ENCODE measurements at regions of chr9 and their contacts with region 1.

Region 1: DNA sequence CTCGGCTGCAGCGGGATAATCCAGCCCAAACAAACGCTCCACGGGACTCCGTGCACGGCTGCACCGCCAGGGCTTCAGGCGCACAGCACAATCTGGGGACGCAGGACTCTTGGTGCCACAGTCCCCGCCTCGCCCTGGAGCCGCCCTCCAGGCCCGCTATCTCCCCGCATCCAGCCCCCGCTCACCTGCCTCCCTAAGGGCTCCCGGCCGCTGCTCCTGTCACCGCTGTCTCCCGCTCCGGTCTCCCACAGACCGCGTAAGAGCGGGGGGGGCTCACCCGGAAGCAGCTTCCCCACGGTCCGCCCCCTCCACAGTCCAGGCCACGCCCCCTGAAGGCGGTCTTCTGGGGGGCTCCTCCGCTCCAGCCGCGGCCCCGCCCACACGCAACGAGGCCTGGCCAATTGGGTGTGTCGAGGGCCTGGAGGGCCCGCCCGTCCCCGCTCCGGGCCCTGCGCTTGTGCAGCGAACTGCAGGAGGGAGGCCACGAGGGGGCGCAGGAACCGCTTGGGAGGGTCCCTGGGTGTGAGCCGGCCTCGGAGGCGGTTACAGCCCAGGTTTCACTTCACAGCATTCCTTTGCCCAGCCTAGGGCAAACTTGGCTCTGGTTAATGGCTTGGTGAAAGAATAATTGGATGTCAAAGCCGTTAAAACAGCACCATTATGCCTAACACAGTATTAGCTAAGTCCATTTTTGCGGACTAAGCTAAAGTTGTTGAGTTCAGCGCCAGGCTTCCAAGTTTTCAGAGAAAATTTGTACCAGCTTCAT is at the start of gene ALAD:
- DNase-seq: peak; percentile 99
- H3K4me3 Mint-ChIP-seq: peak within 1 kb of the TSS; percentile 94
- H3K27ac Mint-ChIP-seq: peak within 1 kb of the TSS; percentile 62
- H3K4me1 Mint-ChIP-seq: peaks cover 20% of the 10 kb centered on the region
- H3K27me3 Mint-ChIP-seq: no peaks in the 10 kb centered on the region
- total RNA-seq, gene ALAD: 27.9 and 28.3 TPM in 2 replicates

Region 2: GRCh38 chr9:113150670-113151611 is 250.3 kb before region 1 on chr9 and contains the start of gene SLC31A2:
- intact Hi-C with region 1: no loop called
- DNase-seq: peak; percentile 82
- H3K4me3 Mint-ChIP-seq: peak within 1 kb of the TSS; percentile 79
- H3K27ac Mint-ChIP-seq: peak within 1 kb of the TSS; percentile 42
- H3K4me1 Mint-ChIP-seq: peaks cover 31% of the 10 kb centered on the region
- H3K27me3 Mint-ChIP-seq: peaks cover 11% of the 10 kb centered on the region
- total RNA-seq, gene SLC31A2: 4.7 and 5.0 TPM in 2 replicates

Region 3: GRCh38 chr9:113221003-113221799 is 180.0 kb before region 1 on chr9 and contains the starts of genes FKBP15 and SLC31A1:
- intact Hi-C with region 1: loop called (anchors 2 kb)
- DNase-seq: peak; percentile 94
- H3K4me3 Mint-ChIP-seq: peak within 1 kb of the TSS; percentile 92
- H3K27ac Mint-ChIP-seq: peak within 1 kb of the TSS; percentile 78
- H3K4me1 Mint-ChIP-seq: peaks cover 41% of the 10 kb centered on the region
- H3K27me3 Mint-ChIP-seq: no peaks in the 10 kb centered on the region
- total RNA-seq, gene FKBP15: 39.6 and 40.4 TPM in 2 replicates
- total RNA-seq, gene SLC31A1: 18.0 and 20.0 TPM in 2 replicates

Region 4: GRCh38 chr9:113340017-113340699 is 61.1 kb before region 1 on chr9 and contains the start of gene WDR31:
- intact Hi-C with region 1: loop called (anchors 2 kb)
- DNase-seq: peak; percentile 75
- H3K4me3 Mint-ChIP-seq: peak within 1 kb of the TSS; percentile 86
- H3K27ac Mint-ChIP-seq: peak within 1 kb of the TSS; percentile 56
- H3K4me1 Mint-ChIP-seq: peaks cover 37% of the 10 kb centered on the region
- H3K27me3 Mint-ChIP-seq: no peaks in the 10 kb centered on the region
- total RNA-seq, gene WDR31: 1.9 and 2.1 TPM in 2 replicates

Region 5: GRCh38 chr9:113376634-113377567 is 24.3 kb before region 1 on chr9 and contains the start of gene HDHD3:
- intact Hi-C with region 1: loop called (anchors 1 kb)
- DNase-seq: peak; percentile 78
- H3K4me3 Mint-ChIP-seq: peak within 1 kb of the TSS; percentile 85
- H3K27ac Mint-ChIP-seq: peak within 1 kb of the TSS; percentile 65
- H3K4me1 Mint-ChIP-seq: peaks cover 9% of the 10 kb centered on the region
- H3K27me3 Mint-ChIP-seq: no peaks in the 10 kb centered on the region
- total RNA-seq, gene HDHD3: 18.7 and 18.8 TPM in 2 replicates

Region 6: GRCh38 chr9:113578882-113579282 is 177.7 kb after region 1 on chr9:
- intact Hi-C with region 1: loop called (anchors 1 kb)
- DNase-seq: peak; percentile 84
- H3K4me3 Mint-ChIP-seq: peak overlapping the region; percentile 79
- H3K27ac Mint-ChIP-seq: peak overlapping the region; percentile 93
- H3K4me1 Mint-ChIP-seq: peaks cover 72% of the 10 kb centered on the region
- H3K27me3 Mint-ChIP-seq: no peaks in the 10 kb centered on the region